Gastrocnemius medialis (tissue), 4 donors: ENCODE measurements at regions of chr5 and their contacts with region 1.

Region 1: GRCh38 chr5:112995764-112996618 is 19.4 kb downstream of the DCP2 start:
- DNase-seq: peak; percentile 43 to 51
- ATAC-seq: peak; percentile 80 to 91
- H3K4me3 ChIP-seq: no peak overlapping the region
- H3K27ac ChIP-seq: no peak overlapping the region
- H3K4me1 ChIP-seq: peaks cover 0 to 13% of the 10 kb centered on the region in 2 donors
- H3K27me3 ChIP-seq: no peaks in the 10 kb centered on the region
- CTCF ChIP-seq: peak; percentile 61 to 87 (median 77)
- POLR2A ChIP-seq: no peak

Region 2: GRCh38 chr5:113179156-113179555 is 183.2 kb after region 1 on chr5:
- in situ Hi-C with region 1: no loop called
- intact Hi-C with region 1: no loop called
- DNase-seq: no peak
- ATAC-seq: peak in 1 of 2 donors; percentile 64
- H3K4me3 ChIP-seq: no peak overlapping the region
- H3K27ac ChIP-seq: peak overlapping the region in 1 of 4 donors; percentile 3
- H3K4me1 ChIP-seq: peaks cover 4 to 41% of the 10 kb centered on the region in 2 donors
- H3K27me3 ChIP-seq: no peaks in the 10 kb centered on the region
- CTCF ChIP-seq: no peak
- POLR2A ChIP-seq: no peak

Region 3: DNA sequence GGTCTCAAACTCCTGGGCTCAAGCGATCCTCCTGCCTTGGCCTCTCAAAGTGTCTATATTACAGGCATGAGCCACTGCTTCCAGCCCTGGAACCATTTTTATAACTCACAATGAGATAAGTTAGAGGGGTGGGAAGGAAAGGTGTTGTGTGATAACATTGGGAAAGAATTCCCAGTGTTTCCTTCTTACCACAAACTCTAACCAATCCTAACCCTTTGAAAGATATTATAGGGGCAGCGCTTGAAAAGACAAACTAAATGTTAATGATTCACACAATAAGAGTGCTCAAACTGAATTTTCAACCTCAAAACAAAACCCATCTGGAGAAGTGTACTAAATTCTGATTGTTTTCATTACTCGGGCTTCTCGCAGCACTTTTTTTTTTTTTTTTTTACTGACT is 329.1 kb after region 1 on chr5:
- in situ Hi-C with region 1: loop called in 3 of 4 experiments (anchors 5 to 25 kb)
- intact Hi-C with region 1: loop called (anchors 5 kb)
- DNase-seq: no peak
- ATAC-seq: no peak
- H3K4me3 ChIP-seq: no peak overlapping the region
- H3K27ac ChIP-seq: no peak overlapping the region
- H3K4me1 ChIP-seq: no peaks in the 10 kb centered on the region
- H3K27me3 ChIP-seq: no peaks in the 10 kb centered on the region
- CTCF ChIP-seq: no peak
- POLR2A ChIP-seq: no peak

Region 4: GRCh38 chr5:113330533-113331208 is 334.7 kb after region 1 on chr5:
- in situ Hi-C with region 1: loop called in 3 of 4 experiments (anchors 5 to 25 kb)
- intact Hi-C with region 1: loop called (anchors 5 kb)
- DNase-seq: peak; percentile 30 to 59
- ATAC-seq: peak; percentile 87
- H3K4me3 ChIP-seq: peak overlapping the region in 1 of 4 donors; percentile 4
- H3K27ac ChIP-seq: peak overlapping the region in 2 of 4 donors; percentile 20 to 67
- H3K4me1 ChIP-seq: peaks cover 0 to 5% of the 10 kb centered on the region in 2 donors
- H3K27me3 ChIP-seq: no peaks in the 10 kb centered on the region
- CTCF ChIP-seq: peak in 2 of 5 experiments; percentile 34 to 50
- POLR2A ChIP-seq: no peak